ENCODE measurements at regions of chr1 and their contacts with region 1.

Region 1: GRCh38 chr1:200154069-200154767 is 126.7 kb downstream of the NR5A2 start:
- DNase-seq: peak; percentile 74
- H3K4me3 Mint-ChIP-seq: peak overlapping the region; percentile 10
- H3K27ac Mint-ChIP-seq: peak overlapping the region; percentile 87
- H3K4me1 Mint-ChIP-seq: peaks cover 45% of the 10 kb centered on the region
- H3K27me3 Mint-ChIP-seq: no peaks in the 10 kb centered on the region

Region 2: DNA sequence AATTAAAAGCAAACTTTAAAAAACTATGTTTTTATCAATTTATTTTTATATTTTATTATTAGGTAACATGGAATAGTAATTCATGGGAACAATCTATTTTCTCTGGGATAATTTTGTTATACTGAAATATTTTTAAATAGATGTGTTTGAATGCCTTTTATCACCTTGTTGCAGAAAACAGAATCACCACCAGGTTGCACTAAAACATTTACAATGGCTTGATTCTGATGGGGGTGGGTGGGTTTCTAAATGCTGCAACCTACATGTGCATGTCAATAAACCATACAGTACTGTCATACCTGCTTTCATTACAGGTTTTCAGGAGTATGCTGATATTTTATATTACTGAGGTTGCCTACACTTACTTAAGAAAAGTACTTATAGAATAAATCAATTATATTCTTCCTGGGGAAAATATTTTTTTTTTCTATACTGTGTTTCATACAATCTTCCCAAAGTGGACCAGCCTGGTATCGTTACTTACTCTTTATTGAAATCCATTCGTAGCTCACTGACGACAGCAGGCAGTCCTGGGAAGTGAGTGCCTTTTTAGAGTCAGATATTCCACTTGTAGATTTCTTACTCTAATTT is 1382.6 kb before region 1 on chr1:
- CTCF ChIA-PET with region 1: no interaction called
- intact Hi-C with region 1: loop called (anchors 10 kb)
- DNase-seq: no peak
- H3K4me3 Mint-ChIP-seq: no peak overlapping the region
- H3K27ac Mint-ChIP-seq: no peak overlapping the region
- H3K4me1 Mint-ChIP-seq: peaks cover 5% of the 10 kb centered on the region
- H3K27me3 Mint-ChIP-seq: no peaks in the 10 kb centered on the region

Region 3: DNA sequence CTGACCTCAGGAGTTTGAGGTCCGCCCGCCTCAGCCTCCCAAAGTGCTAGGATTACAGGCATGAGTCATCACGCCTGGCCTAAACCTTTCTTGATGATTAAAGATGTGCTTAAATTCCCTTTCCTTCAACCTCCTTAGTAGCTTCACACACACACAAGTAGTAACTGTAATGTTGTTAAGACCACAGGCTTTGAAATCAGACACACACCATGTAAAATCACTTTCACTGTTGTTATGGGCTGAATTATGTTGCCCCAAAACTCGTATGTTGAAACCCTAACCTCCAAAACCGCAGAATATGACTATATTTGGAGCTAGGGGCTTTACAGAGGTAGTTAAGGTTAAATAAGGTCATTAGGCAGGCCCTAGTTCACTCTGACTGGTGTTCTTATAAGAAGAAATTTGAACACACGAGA is 53.5 kb after region 1 on chr1:
- CTCF ChIA-PET with region 1: no interaction called
- intact Hi-C with region 1: loop called (anchors 1 kb)
- DNase-seq: no peak
- H3K4me3 Mint-ChIP-seq: no peak overlapping the region
- H3K27ac Mint-ChIP-seq: no peak overlapping the region
- H3K4me1 Mint-ChIP-seq: peaks cover 8% of the 10 kb centered on the region
- H3K27me3 Mint-ChIP-seq: no peaks in the 10 kb centered on the region

Region 4: DNA sequence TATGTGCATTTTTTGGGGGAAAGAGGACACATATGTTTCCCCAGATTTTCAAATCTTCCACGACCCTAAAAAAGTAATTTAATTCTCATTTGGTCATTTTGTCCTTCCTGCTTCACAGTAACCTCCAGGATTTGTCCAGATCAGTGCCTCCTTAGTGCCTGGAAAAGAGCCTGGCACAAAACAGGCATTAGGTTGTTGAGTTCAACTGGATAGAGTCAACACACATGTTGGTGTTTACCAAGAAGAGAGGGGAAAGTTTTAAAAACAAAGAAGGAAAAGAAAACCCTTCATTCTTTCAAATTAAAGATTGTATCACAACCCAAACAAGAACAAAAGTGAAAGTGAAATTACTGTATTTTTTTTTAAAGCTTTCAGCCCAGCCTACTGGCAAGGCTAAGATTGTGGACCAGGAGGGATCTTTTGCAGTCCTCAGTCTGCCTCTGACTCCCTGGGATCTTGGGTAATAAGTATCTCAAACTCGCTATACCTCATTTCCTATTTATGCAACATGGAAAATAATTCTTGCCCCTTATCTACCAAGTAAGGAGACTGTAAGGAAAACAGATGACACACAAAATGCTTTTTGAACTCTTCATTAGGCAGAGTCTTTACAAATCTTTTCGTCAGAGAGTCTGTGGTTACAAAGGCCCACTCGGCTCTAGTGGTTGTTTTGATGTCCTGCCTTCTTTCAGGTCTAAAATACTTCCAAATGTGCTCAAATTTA is 197.8 kb after region 1 on chr1:
- CTCF ChIA-PET with region 1: no interaction called
- intact Hi-C with region 1: loop called (anchors 1 kb)
- DNase-seq: peak; percentile 46
- H3K4me3 Mint-ChIP-seq: peak overlapping the region; percentile 29
- H3K27ac Mint-ChIP-seq: peak overlapping the region; percentile 43
- H3K4me1 Mint-ChIP-seq: peaks cover 33% of the 10 kb centered on the region
- H3K27me3 Mint-ChIP-seq: no peaks in the 10 kb centered on the region

Region 5: DNA sequence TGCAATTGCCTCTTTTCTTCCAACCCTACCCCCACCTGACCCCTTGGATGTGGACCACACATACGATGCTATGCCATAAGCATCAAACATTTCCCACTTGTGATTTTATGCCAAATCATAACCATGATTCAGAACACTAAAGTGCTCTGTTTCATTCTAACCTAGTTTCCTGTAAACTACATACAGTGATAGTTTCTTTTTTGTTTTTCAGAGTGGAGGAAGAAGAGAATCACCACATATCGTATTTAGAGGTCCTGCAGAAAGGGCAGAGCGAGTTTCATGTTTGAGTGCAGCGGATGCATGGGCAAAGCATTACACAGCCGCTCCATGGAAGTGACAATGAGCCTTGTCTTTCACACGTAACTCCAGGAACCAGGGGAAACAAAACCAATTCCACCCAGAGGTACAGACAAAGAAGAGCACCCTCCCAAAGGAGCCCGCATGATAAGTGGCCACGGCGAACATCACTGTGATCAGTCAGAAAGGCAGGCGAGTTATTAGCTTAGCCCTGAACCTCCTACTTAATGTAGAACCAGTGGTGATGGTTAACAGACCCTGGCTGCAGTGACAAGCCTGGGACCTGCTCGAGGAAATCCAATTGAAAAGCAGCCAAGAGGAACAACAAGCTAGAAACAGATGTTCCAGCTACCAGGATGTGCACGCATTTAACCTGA is 319.6 kb after region 1 on chr1:
- CTCF ChIA-PET with region 1: no interaction called
- intact Hi-C with region 1: loop called (anchors 1 kb)
- DNase-seq: peak; percentile 36
- H3K4me3 Mint-ChIP-seq: no peak overlapping the region
- H3K27ac Mint-ChIP-seq: peak overlapping the region; percentile 60
- H3K4me1 Mint-ChIP-seq: peaks cover 35% of the 10 kb centered on the region
- H3K27me3 Mint-ChIP-seq: peaks cover 23% of the 10 kb centered on the region

Region 6: DNA sequence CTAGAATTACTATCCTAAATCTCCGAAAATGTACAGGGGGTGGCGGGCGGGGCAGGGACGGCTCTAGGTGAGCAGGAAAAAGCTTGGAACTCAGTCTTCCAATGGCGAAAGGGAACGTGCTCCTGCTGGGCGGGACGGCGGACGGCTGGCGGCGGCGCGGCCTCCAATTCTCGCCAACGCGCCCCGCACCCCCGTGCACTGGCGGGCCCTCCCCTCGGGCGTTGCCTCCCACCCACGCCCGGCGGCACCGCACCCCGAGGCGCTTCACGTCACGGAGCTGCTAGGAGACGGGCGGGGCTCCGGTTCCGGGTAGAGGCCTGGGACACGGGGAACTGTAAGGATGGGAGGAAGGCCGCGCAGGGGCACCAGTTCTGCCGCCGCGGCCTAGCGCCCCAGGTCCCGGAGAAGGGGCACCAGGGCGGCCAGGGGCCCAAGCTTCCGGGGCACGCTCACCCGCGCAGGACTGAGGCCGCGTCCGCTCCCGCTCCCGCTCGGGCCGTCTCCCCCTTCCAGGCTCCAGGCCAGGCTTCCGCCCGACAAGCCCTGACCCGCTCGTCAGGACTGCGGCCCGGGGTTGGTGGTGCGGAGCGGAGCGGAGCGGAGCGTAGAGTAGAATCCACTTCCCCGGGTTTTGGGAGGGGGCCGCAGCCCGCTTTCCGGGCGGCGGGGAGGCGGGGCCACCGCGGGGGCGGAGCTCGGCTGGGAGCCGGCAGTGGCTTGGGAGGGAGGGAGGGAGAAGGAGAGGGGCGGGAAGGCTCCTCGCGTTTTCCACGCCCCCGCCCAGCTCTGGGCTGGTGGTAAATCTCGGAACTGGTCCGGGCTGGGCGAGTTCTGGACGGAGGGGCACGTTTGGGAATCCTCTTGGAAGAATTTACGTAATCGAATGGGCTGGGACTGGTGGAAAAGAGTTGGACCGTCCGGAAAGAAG is 515.4 kb after region 1 on chr1 and contains the start of gene DDX59:
- CTCF ChIA-PET with region 1: no interaction called
- intact Hi-C with region 1: loop called (anchors 5 kb)
- DNase-seq: peak; percentile 93
- H3K4me3 Mint-ChIP-seq: peak within 1 kb of the TSS; percentile 100
- H3K27ac Mint-ChIP-seq: peak within 1 kb of the TSS; percentile 99
- H3K4me1 Mint-ChIP-seq: peaks cover 35% of the 10 kb centered on the region
- H3K27me3 Mint-ChIP-seq: no peaks in the 10 kb centered on the region
- total RNA-seq, gene DDX59: 20.9 to 22.7 TPM